CD8-positive, alpha-beta T cell (primary cell): ENCODE measurements at regions of chr12 and their contacts with region 1.

Region 1: GRCh38 chr12:50050410-50051098 is 6.8 kb upstream of the ASIC1 start:
- DNase-seq: no peak
- ATAC-seq: no peak
- H3K4me3 ChIP-seq: no peak overlapping the region
- H3K4me3 Mint-ChIP-seq: no peak overlapping the region
- H3K27ac ChIP-seq: no peak overlapping the region
- H3K27ac Mint-ChIP-seq: no peak overlapping the region
- H3K4me1 ChIP-seq: peaks cover 1% of the 10 kb centered on the region
- H3K4me1 Mint-ChIP-seq: peaks cover 3% of the 10 kb centered on the region
- H3K27me3 ChIP-seq: peaks cover 13 to 25% of the 10 kb centered on the region in 2 experiments
- H3K27me3 Mint-ChIP-seq: peaks cover 51% of the 10 kb centered on the region
- CTCF ChIP-seq: no peak

Region 2: DNA sequence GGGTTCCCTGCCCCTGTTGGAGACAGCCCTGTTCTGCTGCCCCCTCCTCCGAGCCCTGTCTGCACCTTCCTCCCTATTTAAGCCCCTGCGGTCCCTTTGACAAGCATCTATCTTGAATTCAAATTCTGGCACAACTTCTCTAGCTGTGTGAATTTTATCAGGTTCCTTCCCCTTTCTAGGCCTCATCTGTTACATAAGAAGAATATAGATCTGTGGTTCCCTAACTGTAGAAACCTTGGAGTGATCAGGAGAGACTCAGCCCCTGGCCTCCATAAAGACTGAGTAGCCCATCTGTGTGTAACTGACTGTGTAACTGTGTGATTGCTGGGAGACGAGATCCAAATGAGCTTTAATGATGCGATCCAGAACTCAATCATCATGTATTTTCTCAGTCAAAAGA is 12.2 kb before region 1 on chr12:
- CTCF ChIA-PET with region 1: interaction called, 54 read pairs
- POLR2A ChIA-PET with region 1: no interaction called
- intact Hi-C with region 1: loop called in 1 of 2 experiments (anchors 1 kb)
- DNase-seq: no peak
- ATAC-seq: no peak
- H3K4me3 ChIP-seq: no peak overlapping the region
- H3K4me3 Mint-ChIP-seq: no peak overlapping the region
- H3K27ac ChIP-seq: no peak overlapping the region
- H3K27ac Mint-ChIP-seq: no peak overlapping the region
- H3K4me1 ChIP-seq: no peaks in the 10 kb centered on the region
- H3K4me1 Mint-ChIP-seq: no peaks in the 10 kb centered on the region
- H3K27me3 ChIP-seq: peaks cover 0 to 2% of the 10 kb centered on the region in 2 experiments
- H3K27me3 Mint-ChIP-seq: peaks cover 9% of the 10 kb centered on the region
- CTCF ChIP-seq: no peak

Region 3: DNA sequence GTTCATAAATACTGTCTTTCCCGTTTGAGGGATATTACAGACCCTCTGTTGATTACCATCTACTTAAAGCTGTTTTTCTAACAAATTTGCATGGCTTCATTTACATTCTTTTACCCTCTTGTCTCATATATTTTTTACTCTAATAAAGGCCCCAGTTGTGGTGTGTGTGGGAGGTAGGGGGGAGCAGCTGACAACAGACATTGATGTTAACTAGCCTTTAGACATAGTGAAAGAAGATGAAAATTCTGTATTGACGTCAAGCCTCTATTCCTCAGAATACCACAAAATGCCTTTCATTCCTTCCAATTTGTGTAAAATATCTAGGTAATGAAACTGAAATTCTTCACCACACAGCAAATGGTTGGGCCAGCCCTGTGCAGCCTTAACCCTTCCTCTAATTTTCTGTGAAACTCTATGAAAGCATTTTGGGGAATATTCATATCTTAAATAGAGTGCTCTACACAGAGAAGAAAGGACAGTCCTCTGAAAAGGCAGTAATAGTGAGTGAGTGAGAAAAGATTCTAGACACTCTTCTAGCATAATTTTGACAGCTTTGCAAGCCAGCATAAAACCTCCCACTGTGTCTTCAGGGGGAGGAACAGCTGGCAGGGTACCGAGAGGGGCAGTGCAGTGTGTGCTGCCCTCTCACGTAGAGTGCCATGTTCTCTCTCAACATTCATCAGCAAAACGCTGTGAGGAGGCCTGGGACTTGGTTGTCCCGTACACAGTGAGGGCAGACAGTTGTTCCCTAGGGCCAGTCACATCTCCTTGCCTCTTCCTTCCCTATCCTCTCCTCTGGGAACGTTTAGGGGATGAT is 136.7 kb after region 1 on chr12:
- CTCF ChIA-PET with region 1: no interaction called
- POLR2A ChIA-PET with region 1: no interaction called
- intact Hi-C with region 1: no loop called
- DNase-seq: no peak
- ATAC-seq: no peak
- H3K4me3 ChIP-seq: no peak overlapping the region
- H3K4me3 Mint-ChIP-seq: no peak overlapping the region
- H3K27ac ChIP-seq: no peak overlapping the region
- H3K27ac Mint-ChIP-seq: no peak overlapping the region
- H3K4me1 ChIP-seq: no peaks in the 10 kb centered on the region
- H3K4me1 Mint-ChIP-seq: peaks cover 9% of the 10 kb centered on the region
- H3K27me3 ChIP-seq: no peaks in the 10 kb centered on the region
- H3K27me3 Mint-ChIP-seq: no peaks in the 10 kb centered on the region
- CTCF ChIP-seq: no peak

Region 4: DNA sequence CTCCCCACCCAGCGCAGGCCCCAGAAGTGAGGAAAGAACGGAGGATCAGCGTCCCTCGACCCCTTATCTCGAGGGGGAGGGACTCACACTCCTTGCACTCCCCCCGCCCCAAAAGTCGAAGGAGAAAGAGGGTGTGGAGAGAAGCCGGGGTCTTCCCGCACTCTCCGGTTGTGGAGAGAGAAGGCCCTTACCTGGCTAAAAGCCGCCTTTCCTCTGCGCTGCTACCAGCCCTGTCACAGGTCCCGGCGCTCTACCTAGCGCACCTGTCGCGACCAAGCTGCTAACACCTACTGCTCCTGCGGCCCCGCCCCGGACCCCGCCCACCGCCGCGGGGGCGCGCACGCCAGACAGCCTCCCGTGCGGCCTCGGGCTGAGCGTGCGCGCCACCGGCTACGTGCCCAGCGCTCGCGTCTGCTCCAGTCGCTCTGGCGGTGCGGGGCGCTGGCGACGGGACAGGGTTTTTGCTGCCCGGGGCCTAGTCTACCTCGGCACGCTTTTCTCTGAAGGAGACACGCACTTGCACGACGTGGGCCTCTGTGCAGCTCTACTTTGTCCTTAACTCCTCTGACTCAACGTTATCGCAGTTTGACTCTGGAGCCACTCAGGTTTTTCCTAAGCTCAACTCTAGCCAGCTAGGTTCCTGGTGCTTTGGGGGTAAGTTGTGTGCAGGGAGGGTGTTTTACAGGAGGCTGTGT is 232.8 kb after region 1 on chr12 and contains the start of gene LIMA1:
- CTCF ChIA-PET with region 1: no interaction called
- POLR2A ChIA-PET with region 1: no interaction called
- intact Hi-C with region 1: no loop called
- DNase-seq: peak; percentile 84 to 96 (median 93)
- ATAC-seq: peak; percentile 97
- H3K4me3 ChIP-seq: peak within 1 kb of the TSS; percentile 57 to 87
- H3K4me3 Mint-ChIP-seq: peak within 1 kb of the TSS; percentile 93
- H3K27ac ChIP-seq: peak within 1 kb of the TSS; percentile 59 to 69
- H3K27ac Mint-ChIP-seq: peak within 1 kb of the TSS; percentile 93
- H3K4me1 ChIP-seq: peaks cover 19% of the 10 kb centered on the region
- H3K4me1 Mint-ChIP-seq: peaks cover 29% of the 10 kb centered on the region
- H3K27me3 ChIP-seq: no peaks in the 10 kb centered on the region
- H3K27me3 Mint-ChIP-seq: no peaks in the 10 kb centered on the region
- CTCF ChIP-seq: no peak
- total RNA-seq, gene LIMA1: 4.2 TPM